A549 (cell line): ENCODE measurements at regions of chr10 and their contacts with region 1.

Region 1: DNA sequence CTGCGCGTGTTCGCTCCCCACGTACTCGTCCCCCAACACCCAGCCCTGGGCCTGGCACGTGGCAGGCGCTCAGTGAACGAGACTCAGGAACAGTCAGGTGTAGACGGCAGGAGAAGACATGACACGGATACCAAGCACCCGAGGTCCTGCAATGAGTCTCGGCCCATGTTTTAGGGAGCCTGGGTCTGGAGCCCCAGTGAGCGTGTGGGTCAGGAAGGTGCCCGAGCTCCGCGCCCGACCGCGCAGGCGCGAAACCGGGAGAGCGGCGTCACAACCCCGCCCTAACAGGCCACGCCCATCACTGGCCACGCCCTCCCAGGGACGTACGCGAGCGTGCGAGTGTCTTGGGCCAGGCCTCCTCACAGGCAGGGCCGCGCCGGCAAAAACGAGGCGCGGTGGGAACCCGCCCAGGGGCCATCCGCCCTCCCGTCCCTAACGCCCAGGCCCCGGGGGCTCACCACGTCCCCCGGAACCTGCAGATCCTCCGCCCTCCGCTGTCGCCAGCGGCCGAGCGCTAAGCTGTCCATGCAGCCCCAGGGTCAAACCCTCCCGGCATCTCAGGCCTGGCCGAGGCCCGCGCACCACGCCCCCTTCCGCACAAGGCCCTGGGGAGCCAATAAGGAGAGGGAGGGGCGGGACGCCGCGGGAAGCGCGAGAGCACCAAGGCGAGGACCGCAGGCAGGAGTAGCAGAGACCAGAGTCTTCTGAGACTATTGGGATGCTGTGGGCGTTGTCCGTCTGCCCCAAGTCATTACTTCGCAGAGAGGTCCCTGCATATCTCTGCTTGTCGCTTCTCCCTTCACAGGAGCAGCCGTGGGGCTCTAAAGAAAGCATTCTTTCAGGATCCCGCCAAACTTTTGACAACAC is at the start of gene C10orf143:
- DNase-seq: peak; percentile 91 to 98
- ATAC-seq: peak; percentile 92
- H3K4me3 ChIP-seq: peak within 1 kb of the TSS; percentile 78
- H3K27ac ChIP-seq: peak within 1 kb of the TSS; percentile 94 to 95
- H3K4me1 ChIP-seq: peaks cover 13% of the 10 kb centered on the region; the same call in 2 of the 3 replicates
- CTCF ChIP-seq: no peak
- EP300 ChIP-seq: no peak
- POLR2A ChIP-seq: peak; percentile 94
- RAD21 ChIP-seq: no peak
- polyA plus RNA-seq, gene C10orf143: 1.5 and 1.6 TPM in 2 replicates

Region 2: GRCh38 chr10:130099344-130099743 is 11.1 kb before region 1 on chr10:
- CTCF ChIA-PET with region 1: interaction called, 6 read pairs
- POLR2A ChIA-PET with region 1: interaction called, 10 read pairs
- DNase-seq: no peak
- ATAC-seq: no peak
- H3K4me3 ChIP-seq: no peak overlapping the region
- H3K27ac ChIP-seq: no peak overlapping the region
- H3K4me1 ChIP-seq: no peaks in the 10 kb centered on the region
- CTCF ChIP-seq: no peak
- EP300 ChIP-seq: no peak
- POLR2A ChIP-seq: no peak
- RAD21 ChIP-seq: no peak

Region 3: DNA sequence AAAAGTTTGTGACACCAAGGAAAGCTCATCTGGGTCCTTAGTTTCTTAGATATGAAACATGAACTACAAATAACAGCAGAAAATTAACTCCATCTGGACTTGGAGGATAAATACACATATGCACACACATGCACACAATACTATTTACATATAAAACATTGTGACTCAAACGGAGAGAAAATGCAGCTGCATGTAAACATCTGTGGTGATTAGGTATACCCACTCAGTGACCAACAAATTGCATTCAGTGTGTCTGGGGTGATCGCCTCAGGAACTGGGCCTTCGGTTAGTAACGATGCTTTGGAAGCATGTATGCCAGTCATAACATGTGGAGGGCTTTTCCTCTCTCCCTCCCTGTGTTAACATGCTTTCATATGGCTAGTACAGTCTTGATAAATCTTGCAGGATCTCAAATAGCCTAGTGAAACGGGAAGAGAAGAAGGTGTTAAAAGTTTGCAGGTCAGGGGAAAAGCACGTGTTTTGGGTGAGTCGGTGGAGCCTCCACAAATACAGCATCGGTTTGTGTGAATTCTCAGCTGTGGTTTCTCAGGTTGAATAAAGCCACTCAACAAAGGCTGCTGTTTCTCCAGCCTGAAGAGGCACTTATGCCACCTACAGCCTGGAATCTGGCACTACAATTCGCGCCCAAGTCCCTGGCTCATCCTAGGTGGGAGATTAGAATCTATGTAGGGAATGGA is 17.0 kb after region 1 on chr10:
- CTCF ChIA-PET with region 1: interaction called, 36 read pairs
- POLR2A ChIA-PET with region 1: interaction called, 29 read pairs
- DNase-seq: peak; percentile 74 to 94
- ATAC-seq: peak; percentile 98 to 99
- H3K4me3 ChIP-seq: no peak overlapping the region
- H3K27ac ChIP-seq: no peak overlapping the region
- H3K4me1 ChIP-seq: 0 out of 3 replicates have a peak, but pooled peaks cover 3% of the 10 kb centered on the region
- CTCF ChIP-seq: peak; percentile 63
- EP300 ChIP-seq: no peak
- POLR2A ChIP-seq: no peak
- RAD21 ChIP-seq: peak; percentile 60 to 76

Region 4: GRCh38 chr10:130136226-130137089 is 26.0 kb after region 1 on chr10 and contains the start of gene GLRX3:
- CTCF ChIA-PET with region 1: interaction called, 20 read pairs
- POLR2A ChIA-PET with region 1: interaction called, 188 read pairs
- DNase-seq: peak; percentile 78 to 83
- ATAC-seq: peak; percentile 83 to 93
- H3K4me3 ChIP-seq: peak within 1 kb of the TSS; percentile 98
- H3K27ac ChIP-seq: peak within 1 kb of the TSS; percentile 96 to 98
- H3K4me1 ChIP-seq: peaks cover 29% of the 10 kb centered on the region
- CTCF ChIP-seq: no peak
- EP300 ChIP-seq: no peak
- POLR2A ChIP-seq: peak; percentile 77
- RAD21 ChIP-seq: no peak
- polyA plus RNA-seq, gene GLRX3: 185 and 219 TPM in 2 replicates